ENCODE measurements at regions of chr12 and their contacts with region 1.

Region 1: DNA sequence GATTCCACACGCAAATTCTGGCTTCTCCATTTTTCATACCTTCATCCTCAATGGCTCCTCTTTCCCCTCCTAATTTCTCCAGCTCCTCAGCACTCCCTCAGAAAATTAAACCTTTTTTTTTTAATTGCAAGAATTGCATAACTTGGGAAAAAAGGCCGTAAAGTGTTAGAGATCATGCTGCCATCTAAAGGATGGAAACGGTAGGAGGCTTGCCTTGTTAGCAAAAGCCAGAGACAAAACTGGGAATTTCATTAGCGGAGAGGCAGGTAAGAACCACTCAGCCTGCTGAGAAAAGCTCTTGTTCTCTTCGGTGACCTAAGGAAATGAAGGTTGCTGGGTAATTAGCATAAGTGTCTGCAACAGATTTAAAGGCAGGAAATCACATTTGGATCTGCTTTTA is 204.3 kb downstream of the AEBP2 start:
- DNase-seq: no peak
- ATAC-seq: peak in 1 of 2 donors; percentile 63
- H3K4me3 ChIP-seq: no peak overlapping the region
- H3K27ac ChIP-seq: no peak overlapping the region
- H3K4me1 ChIP-seq: peaks cover 3% of the 10 kb centered on the region
- H3K27me3 ChIP-seq: no peaks in the 10 kb centered on the region

Region 2: GRCh38 chr12:19507823-19508222 is 135.8 kb before region 1 on chr12:
- intact Hi-C with region 1: loop called in 2 of 4 experiments (anchors 10 kb)
- DNase-seq: no peak
- ATAC-seq: peak in 1 of 2 donors; percentile 54
- H3K4me3 ChIP-seq: no peak overlapping the region
- H3K27ac ChIP-seq: no peak overlapping the region
- H3K4me1 ChIP-seq: peaks cover 6% of the 10 kb centered on the region
- H3K27me3 ChIP-seq: no peaks in the 10 kb centered on the region

Region 3: DNA sequence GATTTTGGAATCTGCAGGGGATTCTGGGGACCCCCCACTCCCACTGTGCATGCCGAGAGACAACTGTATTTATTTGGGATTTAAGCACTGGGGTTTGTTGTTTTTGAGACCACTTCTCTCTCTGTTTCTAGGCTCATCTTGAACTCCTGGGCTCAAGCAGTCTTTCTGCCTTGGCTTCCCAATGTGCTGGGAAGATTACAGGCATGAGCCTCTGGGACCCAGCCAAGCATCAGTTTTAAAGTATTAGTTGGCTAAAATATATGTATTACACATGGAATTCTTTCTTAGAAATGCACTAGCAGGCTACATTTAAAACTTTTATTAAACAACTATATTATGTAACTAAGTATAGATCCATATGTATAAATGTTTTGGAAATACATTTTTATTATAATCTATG is 126.1 kb before region 1 on chr12:
- intact Hi-C with region 1: loop called in 1 of 4 experiments (anchors 10 kb)
- DNase-seq: no peak
- ATAC-seq: no peak
- H3K4me3 ChIP-seq: no peak overlapping the region
- H3K27ac ChIP-seq: no peak overlapping the region
- H3K4me1 ChIP-seq: no peaks in the 10 kb centered on the region
- H3K27me3 ChIP-seq: no peaks in the 10 kb centered on the region

Region 4: DNA sequence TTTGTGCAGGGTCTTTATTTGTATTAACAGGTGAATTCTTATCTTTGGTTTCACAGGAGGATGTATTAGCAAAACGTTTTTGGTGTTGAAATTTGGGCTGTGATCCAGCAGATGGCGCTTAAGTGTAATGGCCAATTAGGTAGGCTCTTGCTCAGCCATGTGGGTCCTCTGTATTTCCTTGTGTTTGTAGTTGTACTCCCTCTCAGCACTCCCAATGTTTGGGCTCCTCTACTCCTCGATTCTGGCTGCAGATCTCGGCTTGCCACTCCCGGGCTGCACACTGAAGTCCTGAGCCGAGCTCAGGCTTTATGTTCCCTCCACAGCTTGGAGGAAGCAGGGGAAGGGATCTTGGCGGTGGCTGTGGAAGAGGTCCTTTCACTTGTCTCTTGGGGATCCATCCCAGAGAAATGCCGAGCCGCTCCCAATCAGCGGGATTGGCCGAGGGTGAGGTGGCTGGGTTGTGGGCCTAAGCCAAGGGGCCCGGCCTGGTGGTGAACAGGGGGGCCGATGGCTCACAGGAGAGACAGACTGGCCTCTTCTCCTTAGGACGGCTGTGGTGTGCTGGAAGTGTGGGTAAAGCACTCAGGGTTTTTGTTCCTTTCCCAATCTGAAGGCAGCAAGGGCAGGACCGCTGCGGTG is 70.6 kb before region 1 on chr12:
- intact Hi-C with region 1: loop called in 1 of 4 experiments (anchors 10 kb)
- DNase-seq: no peak
- ATAC-seq: no peak
- H3K4me3 ChIP-seq: no peak overlapping the region
- H3K27ac ChIP-seq: no peak overlapping the region
- H3K4me1 ChIP-seq: peaks cover 4% of the 10 kb centered on the region
- H3K27me3 ChIP-seq: no peaks in the 10 kb centered on the region

Measured in right cardiac atrium (tissue), 5 donors.